ENCODE measurements at regions of chr11 and their contacts with region 1.

Region 1: DNA sequence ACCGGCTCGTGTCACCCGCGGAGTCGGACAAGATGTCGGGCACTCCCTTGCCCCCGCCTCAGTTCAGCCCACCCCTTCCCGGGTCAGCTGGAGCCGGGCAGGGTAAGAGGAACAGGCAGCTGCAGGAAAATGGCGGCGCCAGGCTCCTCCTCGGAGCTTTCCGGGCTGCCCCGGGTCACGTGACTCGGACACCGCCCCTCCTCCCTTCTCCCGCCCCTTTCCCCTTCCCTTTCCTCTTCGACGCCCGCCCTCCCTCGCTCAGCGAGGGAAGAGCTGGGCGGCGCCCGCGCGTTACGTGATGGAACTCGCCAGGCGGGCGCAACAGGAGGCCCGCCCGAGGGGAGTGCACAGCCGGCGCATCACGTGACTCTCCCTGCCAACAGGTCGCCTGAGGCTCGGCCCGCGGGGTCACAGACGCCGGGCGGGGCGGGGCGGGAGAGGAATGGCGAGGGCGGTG is at the start of gene PICALM:
- DNase-seq: peak; percentile 99
- H3K4me3 ChIP-seq: peak within 1 kb of the TSS; percentile 47 to 94 (median 89)
- H3K27ac ChIP-seq: peak within 1 kb of the TSS; percentile 100
- H3K4me1 ChIP-seq: peaks cover 27% of the 10 kb centered on the region
- H3K27me3 ChIP-seq: no peaks in the 10 kb centered on the region
- CTCF ChIP-seq: no peak
- POLR2A ChIP-seq: peak; percentile 82
- total RNA-seq, gene PICALM: 181 and 202 TPM in 2 replicates

Region 2: GRCh38 chr11:85737748-85738147 is 331.2 kb before region 1 on chr11:
- CTCF ChIA-PET with region 1: no interaction called
- POLR2A ChIA-PET with region 1: no interaction called
- dilution Hi-C with region 1: no loop called
- intact Hi-C with region 1: loop called (anchors 10 kb)
- DNase-seq: no peak
- H3K4me3 ChIP-seq: no peak overlapping the region
- H3K27ac ChIP-seq: peak overlapping the region; percentile 27
- H3K4me1 ChIP-seq: peaks cover 33% of the 10 kb centered on the region
- H3K27me3 ChIP-seq: no peaks in the 10 kb centered on the region
- CTCF ChIP-seq: no peak
- POLR2A ChIP-seq: no peak

Region 3: DNA sequence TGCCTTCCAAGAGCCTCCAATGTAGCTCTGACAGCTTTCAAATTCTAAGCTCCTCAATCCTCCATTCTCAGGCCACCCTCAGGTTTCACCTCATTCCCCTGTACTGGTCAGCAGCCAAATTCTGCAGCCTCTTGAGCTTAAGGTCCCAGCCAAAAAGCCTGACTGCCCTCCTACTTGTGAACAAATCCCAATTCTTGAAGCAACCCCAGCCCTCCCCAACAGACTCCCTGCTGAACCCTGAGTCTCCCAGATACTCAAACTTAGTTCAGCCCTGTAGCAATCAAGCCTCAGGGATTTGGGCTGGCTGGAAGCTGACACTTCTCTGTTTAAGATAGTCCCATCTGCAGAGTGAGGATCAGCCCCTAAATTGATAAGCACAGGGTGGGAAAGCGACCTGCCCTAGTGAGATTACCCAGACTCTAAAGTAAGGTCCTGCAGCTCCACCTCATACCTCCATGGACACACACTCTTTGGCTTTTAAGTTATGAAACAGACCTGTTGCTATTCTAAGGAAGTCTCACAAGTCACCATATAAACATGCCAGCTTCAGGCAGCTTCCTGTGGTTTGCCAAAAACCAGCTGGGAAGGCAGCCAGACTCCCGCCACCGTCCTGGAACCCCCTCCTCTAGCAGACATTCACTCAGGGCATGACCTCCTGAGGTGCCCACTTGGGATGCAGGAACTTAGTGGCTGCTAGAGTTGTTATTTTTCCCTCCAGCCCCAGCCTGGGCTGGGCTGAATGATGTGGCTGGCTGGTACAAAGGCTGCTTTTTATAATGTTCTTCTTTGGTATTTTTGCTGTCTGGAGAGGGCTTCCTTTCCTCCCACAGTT is 82.4 kb after region 1 on chr11:
- CTCF ChIA-PET with region 1: interaction called, 4 read pairs
- POLR2A ChIA-PET with region 1: interaction called, 3 read pairs
- dilution Hi-C with region 1: no loop called
- intact Hi-C with region 1: loop called (anchors 1 kb)
- DNase-seq: peak; percentile 68
- H3K4me3 ChIP-seq: no peak overlapping the region
- H3K27ac ChIP-seq: peak overlapping the region; percentile 94
- H3K4me1 ChIP-seq: peaks cover 24% of the 10 kb centered on the region
- H3K27me3 ChIP-seq: no peaks in the 10 kb centered on the region
- CTCF ChIP-seq: no peak
- POLR2A ChIP-seq: no peak

Region 4: DNA sequence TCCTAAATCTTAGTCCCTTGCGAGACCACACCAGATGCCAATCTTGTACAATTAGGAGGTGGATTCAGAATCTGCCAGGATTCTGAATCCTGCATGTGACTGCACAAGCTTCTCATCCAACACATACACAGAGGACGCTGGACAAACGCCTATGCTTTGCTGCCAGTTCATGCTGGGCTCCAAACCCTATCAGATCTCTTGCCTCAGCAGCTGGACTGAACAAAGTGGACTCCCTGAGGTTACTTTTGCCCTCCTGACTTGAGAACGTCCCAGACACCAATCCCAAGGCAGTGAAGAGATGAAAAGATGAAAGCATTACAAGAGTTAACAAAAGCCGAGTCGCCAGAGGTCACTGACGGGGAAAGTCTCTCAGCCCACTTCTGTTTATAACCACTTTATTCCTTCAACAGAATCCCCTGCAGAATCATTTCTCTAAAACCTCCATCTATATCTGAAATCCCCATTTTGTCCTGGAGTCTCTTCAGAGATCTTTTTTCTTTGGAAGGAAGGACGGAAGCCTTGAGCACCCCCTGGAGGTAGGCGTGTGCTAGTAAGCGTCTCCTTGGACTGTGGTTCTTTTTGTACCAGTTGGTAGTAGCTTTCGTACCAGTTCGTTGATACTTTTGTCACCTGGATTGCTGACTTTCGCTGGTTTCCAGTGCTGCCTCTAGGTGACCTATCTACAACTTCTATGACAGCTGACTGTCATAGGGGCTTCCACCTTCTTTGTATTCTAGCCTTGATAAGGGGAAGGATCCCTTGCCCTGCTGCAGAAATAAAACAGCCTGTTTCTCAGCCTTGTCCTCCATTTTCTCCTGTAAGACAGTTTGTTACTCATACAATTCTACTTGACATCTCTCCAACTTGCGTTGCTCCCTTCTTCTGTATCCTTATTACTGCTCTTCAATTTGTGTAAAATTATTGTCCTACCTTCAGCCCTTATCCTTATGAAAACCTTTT is 149.4 kb after region 1 on chr11:
- CTCF ChIA-PET with region 1: interaction called, 20 read pairs
- POLR2A ChIA-PET with region 1: interaction called, 3 read pairs
- dilution Hi-C with region 1: no loop called
- intact Hi-C with region 1: loop called (anchors 1 kb)
- DNase-seq: peak; percentile 82
- H3K4me3 ChIP-seq: peak overlapping the region in 1 of 3 experiments; percentile 3
- H3K27ac ChIP-seq: no peak overlapping the region
- H3K4me1 ChIP-seq: no peaks in the 10 kb centered on the region
- H3K27me3 ChIP-seq: peaks cover 1 to 12% of the 10 kb centered on the region in 2 experiments
- CTCF ChIP-seq: peak; percentile 86 to 91
- POLR2A ChIP-seq: no peak

Region 5: DNA sequence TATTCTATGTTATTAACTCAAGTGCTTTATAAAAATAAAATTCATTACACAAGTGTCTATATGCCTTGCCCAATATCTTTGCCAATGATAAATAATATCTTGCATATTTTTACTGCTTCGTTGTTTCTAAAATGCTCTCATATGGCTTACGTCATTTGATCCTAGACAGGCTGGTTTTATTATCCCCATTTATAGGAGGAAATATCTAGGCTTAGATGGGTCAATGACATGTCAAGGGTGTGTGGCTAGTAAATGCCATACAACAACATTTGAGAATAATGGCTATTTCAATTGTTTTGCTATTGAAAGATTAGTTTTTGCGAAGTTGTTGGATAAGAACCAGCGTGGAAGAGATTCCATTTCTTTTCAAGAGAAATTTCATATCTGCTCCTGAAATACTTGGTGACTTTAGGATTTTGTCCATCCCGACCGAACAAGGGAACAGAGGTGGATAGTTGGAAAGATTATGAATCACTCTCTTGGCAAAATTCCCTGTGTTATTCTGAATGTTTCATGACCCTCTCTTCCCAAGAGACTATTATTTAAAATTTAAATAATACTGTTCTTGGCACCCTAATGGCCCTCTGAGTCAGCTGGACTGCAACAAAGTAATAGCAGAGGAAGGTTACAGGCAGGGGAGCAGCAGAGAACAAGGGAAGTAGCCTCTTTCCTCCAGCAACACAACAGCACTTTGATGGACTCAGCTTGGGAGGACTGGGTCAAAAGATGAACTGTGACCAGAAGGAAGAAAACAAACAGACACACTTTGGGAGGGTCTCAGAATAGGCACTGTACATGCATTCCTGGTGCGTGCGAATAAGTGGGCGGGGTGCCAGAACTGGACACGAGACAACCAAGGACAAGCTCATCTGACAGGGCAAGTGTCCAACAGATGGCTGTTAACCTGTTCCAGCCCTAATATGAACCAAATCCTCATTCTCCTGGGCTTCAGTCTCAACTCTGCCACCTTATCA is 509.0 kb after region 1 on chr11:
- CTCF ChIA-PET with region 1: no interaction called
- POLR2A ChIA-PET with region 1: no interaction called
- dilution Hi-C with region 1: no loop called
- intact Hi-C with region 1: loop called (anchors 5 kb)
- DNase-seq: peak; percentile 98
- H3K4me3 ChIP-seq: no peak overlapping the region
- H3K27ac ChIP-seq: peak overlapping the region; percentile 63
- H3K4me1 ChIP-seq: peaks cover 59% of the 10 kb centered on the region
- H3K27me3 ChIP-seq: no peaks in the 10 kb centered on the region
- CTCF ChIP-seq: no peak
- POLR2A ChIP-seq: no peak